BJ (cell line): ENCODE measurements at regions of chr18 and their contacts with region 1.

Region 1: GRCh38 chr18:1048032-1048431 is 143.4 kb downstream of the ADCYAP1 start:
- DNase-seq: peak; percentile 9
- H3K4me3 ChIP-seq: no peak overlapping the region
- H3K27me3 ChIP-seq: no peaks in the 10 kb centered on the region
- CTCF ChIP-seq: no peak

Region 2: DNA sequence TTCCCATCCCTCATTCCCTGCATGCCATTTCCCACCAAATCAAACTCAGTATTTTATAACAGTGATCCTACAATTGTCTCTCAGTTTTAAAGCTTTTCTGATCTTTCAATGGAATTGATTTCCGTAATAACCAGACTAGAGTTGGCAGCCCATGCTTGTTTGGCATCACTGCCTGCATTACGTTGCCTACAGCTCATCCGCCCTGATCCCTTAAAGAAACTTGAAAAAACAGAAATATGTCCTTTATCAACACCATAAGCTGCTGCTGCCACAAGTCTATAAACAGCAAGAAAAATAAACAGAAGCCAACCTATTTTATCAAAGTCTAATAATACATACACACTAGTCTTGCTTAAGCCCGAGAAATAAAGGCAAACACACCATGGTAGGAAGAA is 1192.3 kb after region 1 on chr18:
- CTCF ChIA-PET with region 1: no interaction called
- POLR2A ChIA-PET with region 1: interaction called, 11 read pairs
- DNase-seq: no peak
- H3K4me3 ChIP-seq: no peak overlapping the region
- H3K27me3 ChIP-seq: no peaks in the 10 kb centered on the region
- CTCF ChIP-seq: no peak